ENCODE measurements at regions of chr13 and their contacts with region 1.

Region 1: GRCh38 chr13:57874530-57874929 is 243.0 kb downstream of the PCDH17 start:
- DNase-seq: peak; percentile 24
- ATAC-seq: peak; percentile 86 to 92

Region 2: GRCh38 chr13:57739089-57739488 is 135.4 kb before region 1 on chr13:
- intact Hi-C with region 1: loop called in 1 of 2 experiments (anchors 10 kb)
- DNase-seq: no peak
- ATAC-seq: no peak

Region 3: DNA sequence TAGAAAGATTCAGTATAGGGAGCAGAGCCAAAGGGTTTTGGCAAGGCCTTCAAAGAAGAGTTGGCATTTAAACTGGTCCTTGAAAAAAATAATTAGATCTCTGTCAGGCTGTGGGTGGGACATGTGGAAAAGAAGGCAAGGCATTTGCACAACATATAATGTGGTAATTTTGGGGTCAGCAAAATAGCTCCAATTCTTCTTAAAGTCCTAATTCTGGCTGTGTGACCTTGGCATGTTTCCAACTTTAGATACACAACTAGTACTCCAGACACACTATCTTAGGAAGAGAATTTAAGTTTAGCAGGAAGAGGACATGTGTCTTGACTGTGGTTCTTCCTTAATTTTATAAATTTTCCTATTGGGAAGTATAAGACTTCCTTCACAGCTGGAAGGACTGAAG is 36.7 kb before region 1 on chr13:
- intact Hi-C with region 1: no loop called
- DNase-seq: no peak
- ATAC-seq: no peak